ENCODE measurements at regions of chr1 and their contacts with region 1.

Region 1: DNA sequence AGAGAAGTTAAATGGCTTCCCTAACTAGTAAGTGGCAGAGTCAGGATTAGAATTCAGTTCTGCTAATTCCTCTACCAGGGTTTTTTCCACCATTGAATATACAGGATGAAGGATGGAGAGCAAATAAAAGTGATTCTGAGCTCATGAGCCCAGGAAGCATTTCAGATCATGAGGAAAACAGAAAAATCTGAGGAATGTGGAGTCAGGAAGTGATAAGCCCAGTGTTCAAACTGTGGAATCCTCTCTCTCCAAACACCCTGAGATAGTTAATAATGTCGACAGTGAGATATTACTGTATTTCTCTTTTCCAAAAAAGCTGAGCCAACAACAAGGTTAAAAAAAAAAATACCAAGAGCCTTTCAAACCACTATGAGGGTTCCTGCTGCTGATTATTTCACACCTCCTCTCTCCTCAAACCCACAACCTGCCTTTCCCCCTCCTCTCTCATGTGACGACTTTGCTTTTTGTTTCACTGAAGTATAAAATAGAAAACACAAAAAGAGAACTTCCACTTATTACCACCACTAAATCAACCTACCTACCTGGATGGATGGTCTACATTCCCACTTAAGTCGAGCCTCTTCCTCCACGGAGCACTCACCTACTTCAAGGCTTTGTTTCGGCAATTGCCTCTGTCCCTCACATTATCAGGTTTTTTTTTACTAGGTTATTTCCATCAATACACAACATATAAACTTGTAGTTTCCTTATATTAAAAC is 8.9 kb downstream of the SLAMF1 start:
- DNase-seq: peak; percentile 59
- ATAC-seq: peak; percentile 48
- H3K4me3 Mint-ChIP-seq: peak overlapping the region; percentile 67
- H3K27ac Mint-ChIP-seq: peak overlapping the region; percentile 95
- H3K4me1 Mint-ChIP-seq: peaks cover 93% of the 10 kb centered on the region
- H3K27me3 Mint-ChIP-seq: no peaks in the 10 kb centered on the region

Region 2: DNA sequence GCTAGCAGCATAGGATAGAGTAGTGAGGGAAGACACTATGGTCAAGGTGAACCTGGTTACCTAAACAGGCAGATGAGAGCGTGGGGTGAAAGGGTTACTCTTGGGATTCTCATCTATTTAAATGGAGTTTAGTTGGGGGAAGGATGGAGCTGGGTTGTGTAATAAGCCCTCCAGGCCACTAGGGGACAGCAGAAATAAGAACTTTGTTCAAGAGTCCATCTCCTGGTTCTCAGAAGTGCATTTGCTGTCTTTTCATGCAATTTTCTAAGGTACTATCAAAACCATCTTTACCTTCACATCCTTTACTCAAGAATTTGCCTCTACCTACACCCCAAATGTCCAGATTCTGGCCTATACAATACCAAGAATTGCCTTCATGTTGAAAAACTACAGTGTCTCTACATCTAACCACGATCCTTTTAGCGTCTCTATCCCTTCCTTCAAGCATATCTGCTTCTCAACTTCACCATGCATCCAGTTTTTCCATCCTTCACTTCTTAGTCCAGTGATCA is 19.2 kb before region 1 on chr1:
- CTCF ChIA-PET with region 1: interaction called, 11 read pairs
- POLR2A ChIA-PET with region 1: interaction called, 9 read pairs
- intact Hi-C with region 1: loop called in 1 of 2 experiments (anchors 1 kb)
- DNase-seq: peak; percentile 65
- ATAC-seq: no peak
- H3K4me3 Mint-ChIP-seq: no peak overlapping the region
- H3K27ac Mint-ChIP-seq: peak overlapping the region; percentile 71
- H3K4me1 Mint-ChIP-seq: peaks cover 60% of the 10 kb centered on the region
- H3K27me3 Mint-ChIP-seq: no peaks in the 10 kb centered on the region

Region 3: GRCh38 chr1:160711602-160712311 is 73.8 kb after region 1 on chr1 and contains the start of gene CD48:
- CTCF ChIA-PET with region 1: interaction called, 4 read pairs
- POLR2A ChIA-PET with region 1: interaction called, 4 read pairs
- intact Hi-C with region 1: loop called in 1 of 2 experiments (anchors 2 kb)
- DNase-seq: peak; percentile 70
- ATAC-seq: peak; percentile 40
- H3K4me3 Mint-ChIP-seq: no peak within 1 kb of the TSS
- H3K27ac Mint-ChIP-seq: no peak within 1 kb of the TSS
- H3K4me1 Mint-ChIP-seq: peaks cover 34% of the 10 kb centered on the region
- H3K27me3 Mint-ChIP-seq: no peaks in the 10 kb centered on the region
- total RNA-seq, gene CD48: 180 to 217 TPM

Region 4: DNA sequence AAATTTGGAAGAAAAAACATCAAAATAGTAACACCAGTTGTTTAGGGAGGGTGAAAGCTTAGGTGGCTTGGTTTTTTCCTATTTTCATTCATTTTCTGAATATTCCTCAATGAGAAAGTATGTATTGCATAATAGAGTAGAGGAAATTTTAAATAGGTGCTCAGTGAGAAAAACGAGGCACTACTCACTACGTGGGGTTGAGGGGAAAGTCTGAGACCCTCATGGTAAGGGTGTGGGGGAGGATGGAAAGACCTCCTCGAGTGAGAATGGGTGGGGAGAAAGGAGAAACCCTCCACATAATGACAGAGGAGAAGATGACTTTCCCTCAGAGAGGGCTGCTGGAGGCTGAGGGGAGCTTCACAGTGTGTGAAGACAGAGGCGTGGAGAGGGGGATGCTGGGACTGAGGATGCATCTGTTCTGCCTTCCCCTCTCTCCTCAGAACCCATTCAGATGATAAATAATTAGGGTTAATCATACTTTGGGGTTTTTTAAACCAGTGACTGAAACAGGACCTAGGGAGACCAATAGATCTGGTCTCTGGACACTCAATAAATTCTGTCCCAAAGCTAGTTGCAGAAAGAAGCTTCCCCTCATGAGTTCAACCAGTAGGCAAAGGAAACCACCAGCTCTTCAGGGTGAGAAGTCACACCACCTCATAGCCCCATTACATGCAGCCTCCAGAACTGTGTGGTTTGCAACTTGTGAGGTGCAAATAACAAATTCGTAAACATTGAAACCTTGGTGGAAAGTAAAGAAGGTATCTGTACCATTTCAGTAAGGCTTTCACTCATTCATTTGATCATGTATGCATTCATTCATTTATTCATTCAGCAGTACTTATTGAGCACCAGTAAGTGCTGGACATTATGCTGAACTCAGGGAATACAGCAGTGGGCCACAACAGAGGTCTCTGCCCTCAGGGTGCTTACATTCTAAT is 118.2 kb after region 1 on chr1:
- CTCF ChIA-PET with region 1: no interaction called
- POLR2A ChIA-PET with region 1: no interaction called
- intact Hi-C with region 1: no loop called
- DNase-seq: no peak
- ATAC-seq: peak; percentile 53
- H3K4me3 Mint-ChIP-seq: no peak overlapping the region
- H3K27ac Mint-ChIP-seq: peak overlapping the region; percentile 69
- H3K4me1 Mint-ChIP-seq: peaks cover 45% of the 10 kb centered on the region
- H3K27me3 Mint-ChIP-seq: no peaks in the 10 kb centered on the region

Region 5: DNA sequence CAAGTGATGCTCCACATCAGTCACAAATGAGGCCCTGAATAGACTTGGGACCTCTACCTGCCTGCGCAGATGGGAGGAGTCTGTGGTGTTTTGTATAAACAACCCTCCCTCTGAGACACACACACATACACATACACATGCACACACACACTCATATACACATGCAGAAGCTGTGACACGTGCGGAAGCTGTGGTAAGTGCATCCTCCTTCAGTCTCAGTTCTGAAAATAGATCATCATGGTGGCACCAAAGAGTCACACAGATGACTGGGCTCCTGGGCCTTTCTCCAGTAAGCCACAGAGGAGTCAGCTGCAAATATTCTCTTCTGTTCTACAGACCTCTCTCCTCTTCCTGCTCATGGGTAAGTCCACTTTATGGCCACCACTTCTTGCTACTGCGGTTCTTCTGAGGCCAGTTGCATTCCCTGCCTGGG is 158.0 kb after region 1 on chr1 and contains the start of gene LY9:
- CTCF ChIA-PET with region 1: interaction called, 3 read pairs
- POLR2A ChIA-PET with region 1: no interaction called
- intact Hi-C with region 1: loop called in 1 of 2 experiments (anchors 5 kb)
- DNase-seq: peak; percentile 89
- ATAC-seq: peak; percentile 79
- H3K4me3 Mint-ChIP-seq: peak within 1 kb of the TSS; percentile 78
- H3K27ac Mint-ChIP-seq: peak within 1 kb of the TSS; percentile 95
- H3K4me1 Mint-ChIP-seq: peaks cover 61% of the 10 kb centered on the region
- H3K27me3 Mint-ChIP-seq: no peaks in the 10 kb centered on the region
- total RNA-seq, gene LY9: 10.0 to 11.0 TPM

Region 6: DNA sequence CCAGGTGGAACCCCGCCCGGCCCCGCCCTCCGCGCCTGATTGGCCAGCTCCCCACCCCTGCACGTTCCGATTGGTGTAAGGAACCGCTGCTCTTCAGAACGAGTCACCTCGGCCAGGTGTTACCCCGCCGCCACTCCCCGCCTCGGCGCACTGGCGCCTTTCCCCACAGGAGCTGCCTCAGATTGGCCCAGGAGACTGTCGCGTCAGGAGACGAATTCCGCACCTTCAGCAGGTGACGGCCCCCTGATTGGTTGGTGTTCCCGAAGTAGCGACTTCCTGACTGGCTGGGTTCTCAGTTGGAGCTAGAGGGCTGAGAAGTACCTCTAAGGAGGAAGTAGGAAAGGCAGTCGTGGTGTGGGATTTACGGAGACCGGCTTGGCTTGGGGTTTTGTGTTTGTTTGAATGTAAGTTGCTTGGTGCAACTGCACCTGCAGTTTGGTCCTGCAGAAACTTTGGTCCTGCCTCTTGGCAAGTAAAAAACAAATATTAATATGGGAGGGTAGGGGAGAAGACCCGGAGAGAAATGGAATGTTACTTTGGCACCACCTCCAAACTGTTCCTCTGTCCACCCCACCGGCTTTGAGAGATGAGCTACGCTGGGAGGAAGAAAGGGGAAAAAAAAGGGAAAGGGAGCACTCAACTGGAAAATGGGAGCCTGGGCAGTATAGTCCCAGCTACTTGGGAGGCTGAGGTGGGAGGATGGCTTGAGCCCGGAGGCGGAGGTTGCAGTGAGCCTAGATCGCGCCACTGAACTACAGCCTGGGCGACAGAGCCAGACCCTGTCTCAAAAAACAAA is 383.4 kb after region 1 on chr1:
- CTCF ChIA-PET with region 1: no interaction called
- POLR2A ChIA-PET with region 1: no interaction called
- intact Hi-C with region 1: loop called in 1 of 2 experiments (anchors 2 kb)
- DNase-seq: peak; percentile 94
- ATAC-seq: peak; percentile 92
- H3K4me3 Mint-ChIP-seq: peak overlapping the region; percentile 87
- H3K27ac Mint-ChIP-seq: peak overlapping the region; percentile 86
- H3K4me1 Mint-ChIP-seq: peaks cover 33% of the 10 kb centered on the region
- H3K27me3 Mint-ChIP-seq: no peaks in the 10 kb centered on the region